PC-9 (cell line): ENCODE measurements at regions of chr6 and their contacts with region 1.

Region 1: DNA sequence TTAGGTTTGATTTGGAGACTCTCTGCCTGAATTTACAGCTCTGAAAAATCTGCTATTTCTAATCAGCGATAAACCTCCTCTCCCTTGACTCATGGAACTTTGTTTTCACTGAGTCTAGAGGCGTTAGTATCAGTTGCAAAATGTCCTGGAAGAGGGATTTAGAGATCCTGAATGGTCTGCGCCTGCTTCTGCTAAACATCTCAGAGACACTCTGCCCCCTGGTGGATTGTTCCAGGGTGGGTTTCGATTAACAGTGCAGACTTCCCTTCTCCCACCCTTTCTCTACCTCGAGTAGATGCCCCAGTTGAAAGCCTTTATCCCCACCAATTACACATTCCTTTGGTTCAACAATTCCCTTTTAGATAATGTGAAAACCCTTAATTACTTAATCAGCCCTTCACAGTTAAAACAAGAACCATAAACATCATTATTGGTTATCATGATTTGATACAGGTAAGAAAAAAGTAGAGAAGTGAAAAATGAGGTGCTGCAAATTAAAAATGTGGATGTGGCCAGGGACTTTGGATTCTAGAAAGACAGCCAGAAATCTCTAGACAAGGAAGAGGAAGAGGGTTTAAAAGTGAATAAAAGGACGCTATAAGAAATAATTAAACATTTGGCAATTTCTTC is 5.5 kb downstream of the HTR1B start:
- DNase-seq: peak in 1 of 2 experiments; percentile 56
- H3K4me3 ChIP-seq: no peak overlapping the region
- H3K27ac ChIP-seq: no peak overlapping the region
- H3K4me1 ChIP-seq: no peaks in the 10 kb centered on the region
- H3K27me3 ChIP-seq: no peaks in the 10 kb centered on the region
- CTCF ChIP-seq: peak; percentile 66

Region 2: GRCh38 chr6:75934643-75935472 is 1523.0 kb before region 1 on chr6:
- CTCF ChIA-PET with region 1: no interaction called
- POLR2A ChIA-PET with region 1: no interaction called
- intact Hi-C with region 1: loop called (anchors 2 kb)
- DNase-seq: peak in 1 of 2 experiments; percentile 34
- H3K4me3 ChIP-seq: no peak overlapping the region
- H3K27ac ChIP-seq: no peak overlapping the region
- H3K4me1 ChIP-seq: no peaks in the 10 kb centered on the region
- H3K27me3 ChIP-seq: no peaks in the 10 kb centered on the region
- CTCF ChIP-seq: peak; percentile 84

Region 3: DNA sequence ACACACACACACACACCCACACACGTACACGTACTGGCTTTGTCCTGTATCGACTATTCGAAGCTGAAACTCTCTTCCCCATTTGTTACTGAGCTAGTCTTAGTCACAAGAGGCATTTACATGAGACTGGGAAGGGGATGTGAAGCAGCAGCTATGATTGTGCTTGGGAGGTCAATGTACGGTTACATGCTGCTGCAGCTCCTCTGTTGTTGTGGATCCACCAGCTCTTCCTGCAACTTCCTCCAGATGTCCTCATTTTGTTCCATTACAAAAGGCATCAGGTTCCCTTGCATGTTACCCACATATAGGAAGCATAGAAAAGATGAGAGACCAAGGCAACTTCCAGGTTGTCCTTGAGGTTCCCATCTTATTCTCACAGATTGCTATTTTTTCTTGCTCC is 773.0 kb before region 1 on chr6:
- CTCF ChIA-PET with region 1: no interaction called
- POLR2A ChIA-PET with region 1: no interaction called
- intact Hi-C with region 1: loop called (anchors 2 kb)
- DNase-seq: no peak
- H3K4me3 ChIP-seq: no peak overlapping the region
- H3K27ac ChIP-seq: no peak overlapping the region
- H3K4me1 ChIP-seq: no peaks in the 10 kb centered on the region
- H3K27me3 ChIP-seq: no peaks in the 10 kb centered on the region
- CTCF ChIP-seq: no peak

Region 4: GRCh38 chr6:76877238-76877553 is 580.6 kb before region 1 on chr6:
- CTCF ChIA-PET with region 1: no interaction called
- POLR2A ChIA-PET with region 1: no interaction called
- intact Hi-C with region 1: loop called (anchors 10 kb)
- DNase-seq: no peak
- H3K4me3 ChIP-seq: no peak overlapping the region
- H3K27ac ChIP-seq: no peak overlapping the region
- H3K4me1 ChIP-seq: no peaks in the 10 kb centered on the region
- H3K27me3 ChIP-seq: no peaks in the 10 kb centered on the region
- CTCF ChIP-seq: no peak; the same call in 1 of the 2 replicates

Region 5: DNA sequence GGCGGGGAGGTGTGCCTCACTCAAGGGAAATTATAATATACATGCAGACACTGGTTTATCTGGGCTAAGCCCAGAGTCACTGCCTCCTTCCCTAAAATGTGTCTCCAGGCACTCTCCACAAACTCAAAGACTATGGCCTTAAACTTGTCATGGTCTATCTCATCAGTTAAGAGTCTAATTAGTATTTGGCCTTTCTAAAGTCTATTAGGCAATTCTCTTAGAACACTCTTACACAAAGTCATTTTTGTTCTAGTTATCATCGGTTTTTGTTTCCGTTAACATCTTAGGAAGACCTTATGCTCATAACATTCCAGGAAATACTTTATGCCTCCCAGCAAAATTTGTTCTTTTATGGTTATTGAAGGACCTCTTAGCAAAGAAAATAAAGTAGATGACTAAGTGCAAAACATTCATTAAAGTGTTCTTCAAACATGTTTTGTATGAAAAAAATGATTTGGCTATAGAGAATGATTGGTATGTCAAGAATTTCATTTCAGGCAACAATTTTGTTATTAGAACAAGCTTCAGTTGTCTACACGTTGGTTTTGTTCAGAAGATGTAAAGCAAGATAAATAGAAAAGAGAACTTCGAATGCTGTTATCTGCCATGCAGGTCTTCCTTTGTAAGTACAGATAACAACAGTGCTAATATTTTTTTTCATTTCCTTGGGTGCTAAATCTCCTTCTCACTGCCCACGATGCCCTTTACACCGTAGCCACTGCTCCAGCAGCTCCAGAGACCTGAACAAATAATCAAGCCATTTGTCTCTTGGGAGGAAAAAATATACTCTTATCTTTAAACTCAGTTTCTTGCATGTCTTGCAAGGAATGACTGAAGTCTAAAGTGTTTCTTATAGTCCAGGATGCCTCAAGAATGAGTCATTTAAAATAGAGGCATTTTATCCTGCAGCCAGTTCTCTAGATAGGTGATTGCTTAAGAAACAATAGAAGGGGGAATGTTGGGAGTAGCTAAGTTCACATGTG is 165.0 kb before region 1 on chr6:
- CTCF ChIA-PET with region 1: no interaction called
- POLR2A ChIA-PET with region 1: no interaction called
- intact Hi-C with region 1: loop called (anchors 5 kb)
- DNase-seq: peak; percentile 40 to 44
- H3K4me3 ChIP-seq: no peak overlapping the region
- H3K27ac ChIP-seq: no peak overlapping the region
- H3K4me1 ChIP-seq: no peaks in the 10 kb centered on the region
- H3K27me3 ChIP-seq: no peaks in the 10 kb centered on the region
- CTCF ChIP-seq: no peak